PC-3 (cell line): ENCODE measurements at regions of chr2 and their contacts with region 1.

Region 1: DNA sequence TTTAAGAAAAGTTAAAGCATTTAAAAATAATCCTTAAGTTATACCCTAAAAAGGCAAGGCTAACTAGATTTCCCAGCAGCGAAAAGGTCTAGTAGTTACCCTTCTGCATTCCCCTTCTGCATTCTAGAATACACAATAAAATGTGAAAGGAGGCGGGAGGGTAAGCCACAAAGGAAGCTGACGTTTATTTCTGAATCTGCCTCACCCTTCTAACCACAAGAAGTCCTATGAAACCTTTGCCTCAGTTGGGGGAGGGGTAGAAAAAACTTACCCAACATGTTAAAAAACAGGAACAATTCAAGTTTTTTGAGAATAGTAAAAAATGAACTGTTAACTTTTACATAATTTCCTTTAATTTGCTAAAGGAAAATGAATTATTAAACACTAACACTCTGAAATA is 11.3 kb downstream of the STK17B start:
- DNase-seq: peak; percentile 95
- ATAC-seq: peak; percentile 98
- H3K4me3 ChIP-seq: peak overlapping the region; percentile 41
- H3K27ac ChIP-seq: peak overlapping the region; percentile 52
- H3K4me1 ChIP-seq: peaks cover 22% of the 10 kb centered on the region
- H3K27me3 ChIP-seq: no peaks in the 10 kb centered on the region
- CTCF ChIP-seq: no peak

Region 2: GRCh38 chr2:196131949-196132925 is 27.9 kb before region 1 on chr2:
- CTCF ChIA-PET with region 1: no interaction called
- POLR2A ChIA-PET with region 1: no interaction called
- intact Hi-C with region 1: no loop called
- DNase-seq: no peak
- ATAC-seq: peak; percentile 22
- H3K4me3 ChIP-seq: no peak overlapping the region
- H3K27ac ChIP-seq: no peak overlapping the region
- H3K4me1 ChIP-seq: no peaks in the 10 kb centered on the region; the same call in 1 of the 2 replicates
- H3K27me3 ChIP-seq: no peaks in the 10 kb centered on the region
- CTCF ChIP-seq: no peak

Region 3: GRCh38 chr2:196143730-196144131 is 16.4 kb before region 1 on chr2:
- CTCF ChIA-PET with region 1: no interaction called
- POLR2A ChIA-PET with region 1: interaction called, 4 read pairs
- intact Hi-C with region 1: loop called (anchors 2 kb)
- DNase-seq: peak; percentile 87
- ATAC-seq: peak; percentile 97
- H3K4me3 ChIP-seq: no peak overlapping the region
- H3K27ac ChIP-seq: peak overlapping the region; percentile 52
- H3K4me1 ChIP-seq: peaks cover 17% of the 10 kb centered on the region
- H3K27me3 ChIP-seq: no peaks in the 10 kb centered on the region
- CTCF ChIP-seq: no peak